ENCODE measurements at regions of chr7 and their contacts with region 1.

Region 1: GRCh38 chr7:155598810-155599210 is 45.7 kb upstream of the RBM33 start:
- DNase-seq: peak; percentile 59
- ATAC-seq: peak; percentile 95
- H3K4me3 ChIP-seq: no peak overlapping the region
- H3K27ac ChIP-seq: no peak overlapping the region
- H3K4me1 ChIP-seq: no peaks in the 10 kb centered on the region
- H3K27me3 ChIP-seq: peaks cover 18% of the 10 kb centered on the region
- CTCF ChIP-seq: peak; percentile 93
- POLR2A ChIP-seq: no peak
- RAD21 ChIP-seq: peak; percentile 84

Region 2: GRCh38 chr7:155182406-155182970 is 416.3 kb before region 1 on chr7:
- CTCF ChIA-PET with region 1: no interaction called
- POLR2A ChIA-PET with region 1: no interaction called
- dilution Hi-C with region 1: no loop called
- in situ Hi-C with region 1: no loop called
- intact Hi-C with region 1: no loop called
- DNase-seq: no peak
- ATAC-seq: no peak
- H3K4me3 ChIP-seq: no peak overlapping the region
- H3K27ac ChIP-seq: no peak overlapping the region
- H3K4me1 ChIP-seq: no peaks in the 10 kb centered on the region
- H3K27me3 ChIP-seq: no peaks in the 10 kb centered on the region
- CTCF ChIP-seq: no peak
- POLR2A ChIP-seq: no peak
- RAD21 ChIP-seq: no peak

Region 3: DNA sequence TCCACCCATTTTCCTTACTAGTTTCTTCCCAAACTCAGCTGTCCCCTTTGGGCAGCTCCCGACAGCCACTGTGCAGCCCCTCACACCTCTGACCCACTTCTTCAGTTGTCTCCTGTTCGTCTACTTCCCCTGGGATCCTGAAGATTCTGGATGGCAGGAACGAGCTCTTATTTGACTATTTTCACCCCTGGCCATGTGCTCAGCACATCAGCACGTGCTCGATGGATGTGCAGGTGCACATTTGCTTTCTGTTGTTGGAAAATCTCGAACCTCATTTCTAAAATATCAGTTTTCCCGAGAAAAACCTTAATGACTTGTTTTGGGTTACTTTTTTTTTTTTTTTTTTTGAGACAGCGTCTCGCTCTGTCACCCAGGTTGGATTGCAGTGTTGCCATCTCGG is 13.8 kb after region 1 on chr7:
- CTCF ChIA-PET with region 1: interaction called, 10 read pairs
- POLR2A ChIA-PET with region 1: no interaction called
- dilution Hi-C with region 1: no loop called
- in situ Hi-C with region 1: no loop called
- intact Hi-C with region 1: no loop called
- DNase-seq: no peak
- ATAC-seq: no peak
- H3K4me3 ChIP-seq: no peak overlapping the region
- H3K27ac ChIP-seq: no peak overlapping the region
- H3K4me1 ChIP-seq: no peaks in the 10 kb centered on the region
- H3K27me3 ChIP-seq: peaks cover 6% of the 10 kb centered on the region
- CTCF ChIP-seq: no peak
- POLR2A ChIP-seq: no peak
- RAD21 ChIP-seq: no peak

Region 4: GRCh38 chr7:155685070-155685790 is 86.4 kb after region 1 on chr7:
- CTCF ChIA-PET with region 1: no interaction called
- POLR2A ChIA-PET with region 1: no interaction called
- dilution Hi-C with region 1: no loop called
- in situ Hi-C with region 1: no loop called
- intact Hi-C with region 1: no loop called
- DNase-seq: no peak
- ATAC-seq: no peak
- H3K4me3 ChIP-seq: no peak overlapping the region
- H3K27ac ChIP-seq: no peak overlapping the region
- H3K4me1 ChIP-seq: peaks cover 3% of the 10 kb centered on the region; the same call in 1 of the 2 replicates
- H3K27me3 ChIP-seq: no peaks in the 10 kb centered on the region
- CTCF ChIP-seq: no peak
- POLR2A ChIP-seq: no peak
- RAD21 ChIP-seq: no peak

Region 5: GRCh38 chr7:155702616-155703015 is 103.8 kb after region 1 on chr7:
- CTCF ChIA-PET with region 1: interaction called, 8 read pairs
- POLR2A ChIA-PET with region 1: no interaction called
- dilution Hi-C with region 1: no loop called
- in situ Hi-C with region 1: no loop called
- intact Hi-C with region 1: loop called (anchors 1 kb)
- DNase-seq: peak; percentile 39
- ATAC-seq: peak; percentile 40
- H3K4me3 ChIP-seq: no peak overlapping the region
- H3K27ac ChIP-seq: no peak overlapping the region
- H3K4me1 ChIP-seq: peaks cover 4% of the 10 kb centered on the region
- H3K27me3 ChIP-seq: no peaks in the 10 kb centered on the region
- CTCF ChIP-seq: no peak
- POLR2A ChIP-seq: no peak
- RAD21 ChIP-seq: no peak

Region 6: DNA sequence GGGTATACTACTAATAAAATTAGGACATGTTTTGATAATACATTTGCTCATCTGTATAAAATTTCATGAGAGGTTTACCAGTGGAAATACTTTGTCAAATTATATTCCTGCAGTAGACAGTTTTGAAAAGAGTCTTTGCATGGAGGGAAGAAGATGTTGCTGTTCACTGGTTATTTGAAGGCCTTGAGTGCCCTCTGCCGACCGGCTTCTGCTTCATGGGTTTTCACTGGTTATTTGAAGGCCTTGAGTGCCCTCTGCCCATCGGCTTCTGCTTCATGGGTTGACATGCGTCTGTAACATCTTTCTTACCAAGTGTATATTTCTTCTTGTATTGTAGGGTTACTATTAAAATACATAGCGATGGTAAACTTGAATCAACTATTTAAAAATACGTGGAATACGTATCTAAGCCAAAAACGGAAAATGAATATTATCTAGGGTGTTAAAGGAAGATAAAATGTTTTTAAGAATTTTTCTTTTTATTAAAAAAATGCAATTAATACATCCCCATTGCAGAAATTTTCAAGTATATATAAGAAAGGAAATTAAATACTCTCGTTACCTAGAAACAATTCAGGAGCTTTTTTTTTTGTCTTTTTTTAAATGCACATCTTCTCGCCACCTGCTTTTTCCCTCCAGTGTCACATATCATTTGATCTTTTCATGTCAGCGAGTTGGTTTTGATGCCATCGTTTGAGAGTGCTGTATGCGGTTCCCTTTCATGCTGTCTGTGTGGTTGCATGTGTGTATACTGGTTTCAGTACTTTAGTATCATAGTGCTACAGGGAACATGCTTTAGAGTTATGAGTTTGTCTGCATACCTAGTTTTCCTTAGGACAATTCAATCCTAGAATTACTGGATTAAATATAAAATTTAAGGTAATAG is 140.1 kb after region 1 on chr7:
- CTCF ChIA-PET with region 1: interaction called, 13 read pairs
- POLR2A ChIA-PET with region 1: no interaction called
- dilution Hi-C with region 1: no loop called
- in situ Hi-C with region 1: no loop called
- intact Hi-C with region 1: loop called (anchors 1 kb)
- DNase-seq: peak; percentile 76
- ATAC-seq: peak; percentile 86
- H3K4me3 ChIP-seq: no peak overlapping the region
- H3K27ac ChIP-seq: no peak overlapping the region
- H3K4me1 ChIP-seq: no peaks in the 10 kb centered on the region
- H3K27me3 ChIP-seq: no peaks in the 10 kb centered on the region
- CTCF ChIP-seq: peak; percentile 72
- POLR2A ChIP-seq: no peak
- RAD21 ChIP-seq: peak; percentile 80

Region 7: GRCh38 chr7:155763691-155764437 is 165.1 kb after region 1 on chr7:
- CTCF ChIA-PET with region 1: interaction called, 15 read pairs
- POLR2A ChIA-PET with region 1: no interaction called
- dilution Hi-C with region 1: no loop called
- in situ Hi-C with region 1: loop called (anchors 10 kb)
- intact Hi-C with region 1: loop called (anchors 1 kb)
- DNase-seq: peak; percentile 77
- ATAC-seq: peak; percentile 53
- H3K4me3 ChIP-seq: no peak overlapping the region
- H3K27ac ChIP-seq: no peak overlapping the region
- H3K4me1 ChIP-seq: peaks cover 2% of the 10 kb centered on the region; the same call in 1 of the 2 replicates
- H3K27me3 ChIP-seq: no peaks in the 10 kb centered on the region
- CTCF ChIP-seq: no peak
- POLR2A ChIP-seq: no peak
- RAD21 ChIP-seq: no peak